ENCODE measurements at regions of chr6 and their contacts with region 1.

Region 1: GRCh38 chr6:105898286-105898685 is 187.8 kb upstream of the PRDM1 start:
- DNase-seq: peak; percentile 41
- H3K4me3 ChIP-seq: no peak overlapping the region
- H3K27ac ChIP-seq: peak overlapping the region; percentile 21
- H3K4me1 ChIP-seq: peaks cover 98% of the 10 kb centered on the region
- CTCF ChIP-seq: no peak

Region 2: GRCh38 chr6:105757512-105758200 is 140.6 kb before region 1 on chr6:
- CTCF ChIA-PET with region 1: no interaction called
- POLR2A ChIA-PET with region 1: interaction called, 4 read pairs
- intact Hi-C with region 1: loop called (anchors 2 kb)
- DNase-seq: peak; percentile 90
- H3K4me3 ChIP-seq: peak overlapping the region; percentile 47
- H3K27ac ChIP-seq: peak overlapping the region; percentile 84
- H3K4me1 ChIP-seq: peaks cover 50% of the 10 kb centered on the region
- CTCF ChIP-seq: no peak

Region 3: DNA sequence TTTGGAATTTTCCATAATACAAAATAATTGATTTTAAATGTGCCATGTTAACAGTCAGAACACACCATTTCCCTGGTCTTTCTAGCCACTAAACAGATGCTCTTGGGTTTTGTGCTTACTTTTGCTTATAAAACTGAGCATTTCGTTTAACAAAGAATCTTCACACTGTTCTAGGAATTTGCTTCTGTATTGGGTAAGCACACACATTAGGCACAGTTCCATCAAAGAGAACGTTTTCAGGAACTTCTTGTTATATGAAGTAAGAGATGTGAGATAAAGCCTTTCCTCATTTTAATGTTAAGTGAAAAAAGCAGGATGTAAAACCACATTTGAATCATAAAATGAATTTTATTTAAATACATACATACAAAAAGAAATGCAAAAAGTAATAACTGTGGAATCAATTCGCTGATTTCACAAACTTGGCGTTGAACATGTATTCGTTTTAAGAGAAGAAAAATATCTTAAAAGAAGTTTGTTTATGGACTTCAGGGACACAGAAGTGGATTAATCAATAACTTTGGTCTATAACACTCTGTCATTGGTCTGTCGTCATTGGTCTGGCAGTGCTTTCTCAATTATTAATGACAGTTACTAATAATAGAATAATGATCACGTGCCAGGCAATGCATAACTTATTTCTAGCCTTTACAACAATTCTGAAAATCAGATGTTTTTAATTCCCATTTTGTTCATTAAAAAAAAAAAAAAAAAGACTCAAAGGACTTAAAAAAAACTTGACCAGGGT is 12.0 kb before region 1 on chr6:
- CTCF ChIA-PET with region 1: no interaction called
- POLR2A ChIA-PET with region 1: interaction called, 42 read pairs
- intact Hi-C with region 1: no loop called
- DNase-seq: no peak
- H3K4me3 ChIP-seq: no peak overlapping the region
- H3K27ac ChIP-seq: no peak overlapping the region
- H3K4me1 ChIP-seq: peaks cover 56% of the 10 kb centered on the region
- CTCF ChIP-seq: no peak

Region 4: GRCh38 chr6:105909106-105909505 is 10.8 kb after region 1 on chr6:
- CTCF ChIA-PET with region 1: interaction called, 3 read pairs
- POLR2A ChIA-PET with region 1: interaction called, 18 read pairs
- intact Hi-C with region 1: no loop called
- DNase-seq: no peak
- H3K4me3 ChIP-seq: no peak overlapping the region
- H3K27ac ChIP-seq: no peak overlapping the region
- H3K4me1 ChIP-seq: peaks cover 32% of the 10 kb centered on the region
- CTCF ChIP-seq: no peak

Region 5: GRCh38 chr6:106141441-106142237 is 243.4 kb after region 1 on chr6:
- CTCF ChIA-PET with region 1: no interaction called
- POLR2A ChIA-PET with region 1: no interaction called
- intact Hi-C with region 1: no loop called
- DNase-seq: peak; percentile 73
- H3K4me3 ChIP-seq: peak overlapping the region; percentile 11
- H3K27ac ChIP-seq: peak overlapping the region; percentile 85
- H3K4me1 ChIP-seq: peaks cover 51% of the 10 kb centered on the region
- CTCF ChIP-seq: no peak

Measured in OCI-LY7 (cell line).